ENCODE measurements at regions of chr3 and their contacts with region 1.

Region 1: GRCh38 chr3:128607710-128608048 is 42.9 kb downstream of the RPN1 start:
- DNase-seq: no peak
- ATAC-seq: no peak
- H3K4me3 Mint-ChIP-seq: no peak overlapping the region; the same call in 1 of the 2 replicates
- H3K27ac Mint-ChIP-seq: no peak overlapping the region
- H3K4me1 Mint-ChIP-seq: no peaks in the 10 kb centered on the region
- H3K27me3 Mint-ChIP-seq: peaks cover 7% of the 10 kb centered on the region; the same call in 1 of the 2 replicates
- CTCF ChIP-seq: no peak

Region 2: DNA sequence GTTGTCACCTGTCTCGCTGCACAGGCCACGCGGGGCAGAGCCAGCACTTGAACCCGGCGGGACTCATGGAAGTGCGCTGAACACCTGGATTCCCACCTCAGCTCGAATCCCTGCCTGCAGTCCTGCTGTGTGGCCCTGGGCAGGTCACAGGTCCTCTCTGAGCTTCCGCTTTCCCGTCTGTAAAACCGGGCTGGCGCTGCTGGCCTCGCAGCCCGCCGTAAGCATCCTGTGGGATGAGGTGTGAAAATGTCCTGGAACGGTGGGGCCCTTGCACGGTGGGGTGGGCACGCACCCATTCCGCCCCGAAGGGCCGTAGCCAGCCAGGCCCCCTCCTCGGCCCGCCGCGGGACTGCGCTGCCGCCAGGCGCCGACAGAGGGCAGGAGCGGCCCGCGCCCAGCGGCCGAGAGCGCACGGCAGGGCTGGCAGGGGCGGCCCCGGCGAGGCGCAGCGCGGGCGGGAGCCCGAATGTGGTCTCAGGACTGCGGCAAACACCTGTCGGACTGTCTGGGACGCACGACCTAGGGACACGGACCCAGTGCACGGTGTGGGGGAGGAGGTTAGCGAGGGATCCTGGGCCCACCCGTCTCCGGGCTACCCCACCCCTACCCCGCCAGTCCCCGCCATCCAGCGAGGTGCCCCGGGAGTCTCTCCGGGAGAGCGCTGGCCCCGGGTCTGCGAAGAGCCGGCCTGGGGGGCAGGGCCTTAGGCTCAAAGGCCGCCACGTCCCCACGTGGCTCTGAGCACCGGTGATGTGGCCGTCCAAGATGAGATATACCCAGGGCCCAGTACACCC is 181.4 kb before region 1 on chr3:
- CTCF ChIA-PET with region 1: interaction called, 27 read pairs
- POLR2A ChIA-PET with region 1: no interaction called
- DNase-seq: peak; percentile 77
- ATAC-seq: peak; percentile 81
- H3K4me3 Mint-ChIP-seq: no peak overlapping the region
- H3K27ac Mint-ChIP-seq: no peak overlapping the region
- H3K4me1 Mint-ChIP-seq: peaks cover 22% of the 10 kb centered on the region
- H3K27me3 Mint-ChIP-seq: peaks cover 57% of the 10 kb centered on the region
- CTCF ChIP-seq: peak; percentile 79

Region 3: GRCh38 chr3:128470134-128470899 is 137.4 kb before region 1 on chr3:
- CTCF ChIA-PET with region 1: no interaction called
- POLR2A ChIA-PET with region 1: no interaction called
- DNase-seq: no peak
- ATAC-seq: no peak
- H3K4me3 Mint-ChIP-seq: no peak overlapping the region
- H3K27ac Mint-ChIP-seq: no peak overlapping the region
- H3K4me1 Mint-ChIP-seq: peaks cover 22% of the 10 kb centered on the region
- H3K27me3 Mint-ChIP-seq: peaks cover 70% of the 10 kb centered on the region
- CTCF ChIP-seq: no peak

Region 4: GRCh38 chr3:128497387-128498126 is 110.1 kb before region 1 on chr3:
- CTCF ChIA-PET with region 1: interaction called, 14 read pairs
- POLR2A ChIA-PET with region 1: no interaction called
- DNase-seq: peak; percentile 93
- ATAC-seq: peak; percentile 66
- H3K4me3 Mint-ChIP-seq: peak overlapping the region; percentile 71
- H3K27ac Mint-ChIP-seq: no peak overlapping the region
- H3K4me1 Mint-ChIP-seq: peaks cover 21% of the 10 kb centered on the region
- H3K27me3 Mint-ChIP-seq: peaks cover 88% of the 10 kb centered on the region
- CTCF ChIP-seq: peak; percentile 86

Region 5: GRCh38 chr3:128584412-128585020 is 23.2 kb before region 1 on chr3:
- CTCF ChIA-PET with region 1: interaction called, 14 read pairs
- POLR2A ChIA-PET with region 1: interaction called, 4 read pairs
- DNase-seq: peak; percentile 82
- ATAC-seq: peak; percentile 99
- H3K4me3 Mint-ChIP-seq: no peak overlapping the region
- H3K27ac Mint-ChIP-seq: no peak overlapping the region
- H3K4me1 Mint-ChIP-seq: peaks cover 14% of the 10 kb centered on the region
- H3K27me3 Mint-ChIP-seq: peaks cover 8% of the 10 kb centered on the region
- CTCF ChIP-seq: 0 out of 2 replicates have a peak, but pooled peaks have one; percentile 42

Region 6: DNA sequence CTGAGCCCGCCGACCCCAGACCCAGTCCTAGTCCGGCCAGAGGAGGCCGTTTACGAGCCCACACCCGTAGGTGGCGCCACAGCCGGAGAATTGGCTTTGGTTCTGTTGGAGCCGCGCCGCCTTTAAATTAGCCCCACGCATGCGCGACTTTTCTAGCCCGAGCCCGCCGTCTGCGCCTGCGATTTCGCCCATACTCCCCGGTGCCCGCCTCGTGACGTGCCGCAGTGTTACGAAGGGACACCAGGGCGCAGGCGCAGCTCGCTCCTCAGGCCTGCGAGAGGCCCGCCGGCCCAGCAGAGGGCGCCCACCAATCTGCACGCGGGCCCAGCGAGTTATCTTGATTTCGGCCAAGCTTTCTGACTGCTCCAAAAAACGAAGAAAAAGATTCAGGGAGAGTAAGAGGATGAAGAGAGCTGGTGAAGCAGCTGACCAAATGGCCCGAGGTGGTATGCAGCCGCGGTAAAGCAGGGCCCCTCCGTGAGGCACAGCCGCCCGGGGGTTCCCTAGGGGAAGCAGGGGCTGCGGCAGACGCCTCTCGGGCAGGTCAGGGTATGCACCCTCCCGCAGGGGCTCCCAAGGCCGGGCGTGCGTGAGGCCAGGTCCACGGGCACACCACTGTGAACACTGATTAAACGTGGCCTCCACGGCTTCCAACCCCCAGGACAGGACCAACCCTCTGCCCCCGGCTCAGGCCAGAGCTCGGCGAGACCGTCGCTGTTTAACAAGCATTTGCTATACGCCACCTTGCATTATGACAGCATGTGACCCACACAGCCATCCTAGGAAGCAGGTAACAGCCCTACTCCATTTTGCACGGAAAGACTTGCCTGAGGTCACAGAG is 10.1 kb after region 1 on chr3:
- CTCF ChIA-PET with region 1: interaction called, 55 read pairs
- POLR2A ChIA-PET with region 1: interaction called, 4 read pairs
- DNase-seq: peak; percentile 98
- ATAC-seq: peak; percentile 91
- H3K4me3 Mint-ChIP-seq: peak overlapping the region; percentile 91
- H3K27ac Mint-ChIP-seq: peak overlapping the region; percentile 89
- H3K4me1 Mint-ChIP-seq: peaks cover 14% of the 10 kb centered on the region
- H3K27me3 Mint-ChIP-seq: no peaks in the 10 kb centered on the region
- CTCF ChIP-seq: peak; percentile 75; the same call in 1 of the 2 replicates

Region 7: DNA sequence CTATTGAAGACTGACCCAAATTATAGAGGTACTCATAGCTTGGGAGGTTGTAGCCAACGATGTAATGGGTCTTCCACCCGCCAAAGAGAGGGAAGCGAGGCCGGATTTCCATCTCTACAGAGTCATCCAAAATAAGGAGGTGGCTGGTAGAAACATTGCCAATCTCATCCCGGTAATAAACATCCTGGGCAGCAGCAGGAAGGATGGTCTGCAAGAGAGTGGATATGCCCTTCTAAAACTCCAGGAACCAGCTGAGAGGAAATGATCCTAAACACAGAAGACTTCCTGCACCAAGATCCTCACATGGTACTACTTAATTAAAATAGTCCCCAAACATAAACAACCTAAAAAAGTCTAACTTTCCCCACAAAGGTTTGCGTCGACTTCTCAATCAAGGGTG is 22.3 kb after region 1 on chr3:
- CTCF ChIA-PET with region 1: no interaction called
- POLR2A ChIA-PET with region 1: no interaction called
- DNase-seq: no peak
- ATAC-seq: no peak
- H3K4me3 Mint-ChIP-seq: no peak overlapping the region
- H3K27ac Mint-ChIP-seq: no peak overlapping the region
- H3K4me1 Mint-ChIP-seq: no peaks in the 10 kb centered on the region
- H3K27me3 Mint-ChIP-seq: no peaks in the 10 kb centered on the region
- CTCF ChIP-seq: no peak

Measured in WTC11 (cell line).